ENCODE measurements at regions of chr12 and their contacts with region 1.

Region 1: GRCh38 chr12:13196130-13196921 is at the start of gene EMP1:
- DNase-seq: peak; percentile 60 to 95 (median 76)
- H3K4me3 ChIP-seq: peak within 1 kb of the TSS in 1 of 2 donors; percentile 54
- H3K4me3 Mint-ChIP-seq: peak within 1 kb of the TSS; percentile 80 to 93 (median 88)
- H3K27ac ChIP-seq: peak within 1 kb of the TSS; percentile 35
- H3K27ac Mint-ChIP-seq: peak within 1 kb of the TSS; percentile 74 to 96 (median 84)
- H3K4me1 ChIP-seq: peaks cover 19% of the 10 kb centered on the region
- H3K4me1 Mint-ChIP-seq: peaks cover 19 to 32% (median 25%) of the 10 kb centered on the region in 4 donors
- H3K27me3 ChIP-seq: no peaks in the 10 kb centered on the region
- H3K27me3 Mint-ChIP-seq: peaks cover under 1 to 3% of the 10 kb centered on the region in 2 donors
- total RNA-seq, gene EMP1: 4.5 to 5.8 TPM

Region 2: GRCh38 chr12:13165617-13166041 is 30.7 kb before region 1 on chr12:
- CTCF ChIA-PET with region 1: interaction called, 5 read pairs
- POLR2A ChIA-PET with region 1: no interaction called
- intact Hi-C with region 1: loop called (anchors 1 kb)
- DNase-seq: peak; percentile 51 to 80 (median 55)
- H3K4me3 ChIP-seq: peak overlapping the region in 1 of 2 donors; percentile 19
- H3K4me3 Mint-ChIP-seq: peak overlapping the region in 6 of 8 donors; percentile 19 to 68 (median 45)
- H3K27ac ChIP-seq: no peak overlapping the region
- H3K27ac Mint-ChIP-seq: peak overlapping the region in 6 of 7 donors; percentile 26 to 77 (median 62)
- H3K4me1 ChIP-seq: peaks cover 23% of the 10 kb centered on the region
- H3K4me1 Mint-ChIP-seq: peaks cover 15 to 30% (median 21%) of the 10 kb centered on the region in 4 donors
- H3K27me3 ChIP-seq: no peaks in the 10 kb centered on the region
- H3K27me3 Mint-ChIP-seq: peaks cover 2 to 4% of the 10 kb centered on the region in 2 donors

Region 3: DNA sequence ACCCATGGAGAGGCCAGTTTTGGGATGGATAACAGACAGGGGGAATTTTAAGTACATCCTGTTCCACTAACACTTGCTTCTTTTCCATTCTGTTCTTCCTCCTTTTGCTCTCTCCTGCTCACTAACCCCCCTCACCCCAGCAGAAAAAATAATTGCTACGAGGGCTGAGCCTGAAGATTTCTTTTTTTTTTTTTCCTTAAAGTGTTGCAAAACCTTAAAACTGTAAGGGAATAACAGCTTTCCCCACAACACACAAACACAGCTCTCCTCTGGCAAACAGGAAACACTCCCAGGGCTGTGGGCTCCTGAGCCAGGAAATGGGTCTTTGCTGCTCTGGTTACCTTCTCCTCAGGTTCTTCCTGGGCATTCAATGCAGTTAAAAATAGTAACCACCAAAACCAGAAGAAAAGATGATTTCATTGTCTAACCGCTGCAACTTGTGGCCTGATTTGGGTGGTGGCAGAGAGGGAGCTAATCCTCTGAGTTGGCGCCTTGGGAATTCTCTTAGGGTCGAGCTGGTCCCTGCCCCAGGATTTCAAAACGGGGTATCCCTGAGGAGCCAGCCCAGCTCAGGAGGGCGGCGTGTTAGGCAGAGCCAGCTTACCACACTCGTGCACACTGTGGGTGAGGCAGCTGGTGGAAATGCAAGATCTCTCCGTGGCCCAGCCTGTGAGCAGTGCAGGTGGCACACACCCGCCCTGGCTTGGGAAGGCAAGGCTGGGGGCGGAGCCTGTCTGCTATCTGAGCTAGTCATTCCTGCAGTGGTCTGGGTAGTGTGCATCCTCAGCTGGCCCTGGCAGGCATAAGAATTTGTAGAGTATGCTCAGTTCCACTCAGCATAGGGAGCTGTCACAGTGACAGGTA is 16.9 kb before region 1 on chr12:
- CTCF ChIA-PET with region 1: interaction called, 3 read pairs
- POLR2A ChIA-PET with region 1: interaction called, 4 read pairs
- intact Hi-C with region 1: loop called (anchors 1 kb)
- DNase-seq: peak; percentile 34 to 56 (median 39)
- H3K4me3 ChIP-seq: peak overlapping the region in 1 of 2 donors; percentile 28
- H3K4me3 Mint-ChIP-seq: peak overlapping the region; percentile 71 to 89 (median 78)
- H3K27ac ChIP-seq: no peak overlapping the region
- H3K27ac Mint-ChIP-seq: peak overlapping the region; percentile 63 to 87 (median 72)
- H3K4me1 ChIP-seq: peaks cover 17% of the 10 kb centered on the region
- H3K4me1 Mint-ChIP-seq: peaks cover 15 to 28% (median 23%) of the 10 kb centered on the region in 4 donors
- H3K27me3 ChIP-seq: no peaks in the 10 kb centered on the region
- H3K27me3 Mint-ChIP-seq: peaks cover 0 to 2% of the 10 kb centered on the region in 2 donors

Measured in CD4-positive, alpha-beta memory T cell (primary cell).